Heart right ventricle (tissue), 16 donors: ENCODE measurements at regions of chr20 and their contacts with region 1.

Region 1: DNA sequence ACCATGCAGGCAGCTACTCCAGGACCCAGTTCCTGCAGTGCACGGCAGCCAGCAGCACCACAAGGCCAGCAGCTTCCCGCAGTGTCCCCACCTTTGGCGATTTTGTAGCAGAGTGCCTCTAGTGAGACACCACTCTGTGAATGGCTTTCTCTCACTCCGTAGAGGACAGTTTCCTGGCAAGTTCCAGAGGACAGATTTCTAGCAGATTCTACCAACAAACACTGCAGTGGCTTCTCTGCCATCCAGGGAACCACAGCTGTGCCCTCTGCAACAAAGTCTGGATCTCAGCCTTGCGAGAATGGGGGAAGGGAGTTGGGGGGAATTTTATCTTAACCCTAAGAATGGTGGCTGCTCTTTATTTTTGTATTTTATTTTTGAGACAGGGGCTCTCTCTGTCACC is 28.7 kb downstream of the SNHG17 start:
- DNase-seq: no peak
- ATAC-seq: no peak
- H3K4me3 ChIP-seq: no peak overlapping the region
- H3K27ac ChIP-seq: no peak overlapping the region
- H3K4me1 ChIP-seq: no peaks in the 10 kb centered on the region
- H3K27me3 ChIP-seq: peaks cover 0 to 7% (median 0%) of the 10 kb centered on the region in 7 donors
- CTCF ChIP-seq: no peak

Region 2: GRCh38 chr20:37564388-37565133 is 841.9 kb before region 1 on chr20:
- intact Hi-C with region 1: loop called in 1 of 10 experiments (anchors 10 kb)
- DNase-seq: peak; percentile 16 to 49
- ATAC-seq: peak in 7 of 8 donors; percentile 50 to 81 (median 72)
- H3K4me3 ChIP-seq: no peak overlapping the region
- H3K27ac ChIP-seq: no peak overlapping the region
- H3K4me1 ChIP-seq: peaks cover 0 to 7% (median 5%) of the 10 kb centered on the region in 9 donors
- H3K27me3 ChIP-seq: peaks cover 0 to 83% (median 61%) of the 10 kb centered on the region in 7 donors
- CTCF ChIP-seq: peak; percentile 83 to 95 (median 91)

Region 3: DNA sequence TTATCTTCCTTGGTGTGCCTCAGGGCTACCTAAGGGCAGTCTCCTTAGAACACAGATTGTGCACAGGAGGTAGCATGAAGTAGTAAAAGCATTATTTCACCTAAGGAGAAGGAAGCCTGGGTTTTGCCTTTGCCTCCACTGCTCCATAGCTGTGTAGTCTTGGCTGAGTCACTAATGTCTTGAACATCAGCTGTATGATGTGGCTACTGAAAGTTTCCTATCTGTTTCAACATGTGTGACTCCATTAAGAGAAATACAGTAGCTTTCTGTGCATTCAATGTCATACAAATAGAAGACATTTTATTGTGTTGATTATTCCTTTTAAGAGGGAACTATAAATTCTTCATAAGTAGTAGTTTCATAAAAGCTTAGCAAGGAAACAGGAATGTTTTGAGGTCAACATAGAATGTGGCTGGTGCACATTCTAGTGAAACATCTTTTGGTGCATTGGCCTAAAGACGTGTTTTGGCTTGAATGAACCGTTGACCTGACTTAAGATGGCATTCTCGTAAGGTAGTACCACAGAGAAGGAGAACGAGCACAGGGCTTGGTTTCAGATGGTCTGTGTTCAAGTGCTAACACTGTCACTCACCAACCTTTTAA is 642.0 kb before region 1 on chr20:
- intact Hi-C with region 1: no loop called
- DNase-seq: no peak
- ATAC-seq: no peak
- H3K4me3 ChIP-seq: no peak overlapping the region
- H3K27ac ChIP-seq: no peak overlapping the region
- H3K4me1 ChIP-seq: no peaks in the 10 kb centered on the region
- H3K27me3 ChIP-seq: no peaks in the 10 kb centered on the region
- CTCF ChIP-seq: no peak

Region 4: DNA sequence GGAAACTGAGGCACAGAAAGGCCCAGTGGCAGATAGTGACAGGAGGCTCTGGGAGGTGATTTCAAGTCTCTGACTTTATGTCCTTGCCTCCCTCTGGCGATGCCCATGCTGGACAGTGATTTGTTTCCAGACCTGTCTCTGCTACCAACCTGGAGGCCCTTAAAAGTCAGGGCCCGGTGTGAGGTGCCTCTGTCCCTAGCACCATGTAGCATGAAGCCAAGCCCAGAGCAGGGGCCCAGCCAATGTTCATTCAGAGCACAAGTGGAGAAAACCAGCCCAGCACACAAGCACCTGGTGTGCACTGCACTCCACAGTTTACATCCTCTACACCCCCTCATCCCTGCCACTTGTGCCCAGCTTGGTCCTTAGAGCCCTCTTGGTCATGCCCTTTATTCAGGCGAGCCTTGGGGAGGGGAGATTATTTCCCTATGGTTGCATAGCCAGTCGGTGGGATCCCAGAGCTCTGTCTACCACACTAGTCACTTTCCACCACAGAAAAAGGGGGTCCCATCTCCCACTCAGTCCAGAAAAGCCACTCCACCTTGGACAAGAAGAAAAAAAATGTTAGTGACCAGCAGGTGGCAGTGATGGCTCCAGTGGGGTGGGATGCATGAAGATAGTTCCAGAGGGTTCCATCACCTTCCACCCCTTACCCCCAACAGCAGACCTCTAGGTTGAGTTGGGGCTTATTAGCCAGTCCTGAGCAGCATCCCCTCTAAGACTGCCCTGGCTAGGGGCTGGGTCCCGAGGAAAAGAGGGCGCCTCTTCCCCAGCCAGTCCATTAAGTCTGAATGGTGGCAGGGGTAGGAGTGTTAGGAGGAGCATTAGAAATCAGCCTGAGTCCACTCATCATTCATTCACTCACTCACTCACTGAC is 176.9 kb before region 1 on chr20:
- intact Hi-C with region 1: loop called in 7 of 10 experiments (anchors 5 to 10 kb)
- DNase-seq: no peak
- ATAC-seq: peak in 5 of 8 donors; percentile 2 to 33 (median 17)
- H3K4me3 ChIP-seq: no peak overlapping the region
- H3K27ac ChIP-seq: no peak overlapping the region
- H3K4me1 ChIP-seq: peaks cover 0 to 14% (median 9%) of the 10 kb centered on the region in 9 donors
- H3K27me3 ChIP-seq: peaks cover 0 to 5% (median 0%) of the 10 kb centered on the region in 7 donors
- CTCF ChIP-seq: peak; percentile 16 to 65 (median 51)

Region 5: DNA sequence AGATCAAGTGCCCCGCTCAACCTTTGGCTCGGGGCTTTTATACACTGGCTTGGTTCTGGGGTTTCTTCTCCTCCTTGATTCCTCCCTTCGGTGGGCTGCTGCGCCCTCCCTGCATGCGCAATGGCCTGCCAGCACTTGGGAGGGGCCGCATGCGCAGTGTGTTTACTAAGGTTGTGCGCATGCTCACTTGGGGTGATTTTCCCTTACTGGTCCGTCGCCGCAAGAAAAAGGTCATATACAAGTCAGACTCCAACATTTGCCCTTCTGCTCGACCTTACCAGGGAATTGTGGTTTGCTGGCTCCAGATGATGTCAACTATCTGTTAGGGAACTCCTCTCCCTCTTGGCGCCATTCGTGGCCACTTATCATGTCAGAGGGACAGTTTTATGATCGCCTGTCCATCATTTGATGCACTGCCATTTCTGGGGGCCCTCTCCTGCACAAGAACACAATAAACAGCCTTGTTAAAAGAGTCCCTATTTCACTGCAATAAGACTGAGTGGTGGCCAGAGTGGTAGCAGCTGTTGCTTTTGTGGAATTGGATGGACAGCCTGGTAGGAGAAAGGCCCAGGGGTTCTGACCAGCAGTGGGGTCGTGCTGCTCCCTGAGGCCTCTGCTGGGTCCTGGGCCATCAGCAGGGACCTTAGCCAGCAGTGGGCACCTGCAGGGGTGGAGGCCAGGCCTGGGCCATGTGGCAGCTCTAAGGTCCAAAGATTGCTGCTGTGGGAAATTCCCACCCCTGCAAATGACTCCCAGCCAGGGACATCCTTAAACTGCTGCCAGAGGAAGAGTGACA is 63.0 kb before region 1 on chr20:
- intact Hi-C with region 1: loop called in 3 of 10 experiments (anchors 5 to 10 kb)
- DNase-seq: peak in 1 of 2 donors; percentile 24
- ATAC-seq: peak in 1 of 8 donors; percentile 32
- H3K4me3 ChIP-seq: no peak overlapping the region
- H3K27ac ChIP-seq: no peak overlapping the region
- H3K4me1 ChIP-seq: peaks cover 0 to 20% (median 0%) of the 10 kb centered on the region in 9 donors
- H3K27me3 ChIP-seq: no peaks in the 10 kb centered on the region
- CTCF ChIP-seq: no peak